ENCODE measurements at regions of chr11 and their contacts with region 1.

Region 1: GRCh38 chr11:47819743-47820142 is 28.4 kb downstream of the NUP160 start:
- DNase-seq: no peak
- ATAC-seq: no peak
- H3K4me3 Mint-ChIP-seq: no peak overlapping the region
- H3K27ac Mint-ChIP-seq: peak overlapping the region; percentile 32
- H3K4me1 Mint-ChIP-seq: peaks cover 9% of the 10 kb centered on the region
- H3K27me3 Mint-ChIP-seq: no peaks in the 10 kb centered on the region
- CTCF ChIP-seq: no peak

Region 2: DNA sequence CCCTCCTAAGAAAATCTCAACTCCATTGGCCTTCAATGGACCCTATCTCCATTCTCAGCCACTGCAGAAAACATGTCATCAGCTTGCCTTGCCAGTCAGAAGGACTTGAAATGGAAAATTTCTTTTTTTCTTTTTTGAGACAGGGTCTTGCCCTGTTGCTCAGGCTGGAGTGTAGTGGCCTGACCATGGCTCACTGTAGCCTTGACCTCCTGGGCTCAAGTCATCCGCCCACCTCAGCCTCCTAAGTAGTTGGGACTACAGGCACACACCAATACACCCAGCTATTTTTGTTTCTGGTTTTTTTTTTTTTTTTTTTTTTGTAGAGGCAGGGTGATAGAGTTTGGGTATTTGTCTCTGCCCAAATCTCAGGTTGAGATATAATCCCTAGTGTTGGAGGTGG is 133.6 kb before region 1 on chr11:
- CTCF ChIA-PET with region 1: no interaction called
- POLR2A ChIA-PET with region 1: interaction called, 11 read pairs
- intact Hi-C with region 1: no loop called
- DNase-seq: no peak
- ATAC-seq: no peak
- H3K4me3 Mint-ChIP-seq: no peak overlapping the region
- H3K27ac Mint-ChIP-seq: no peak overlapping the region
- H3K4me1 Mint-ChIP-seq: peaks cover 9% of the 10 kb centered on the region
- H3K27me3 Mint-ChIP-seq: no peaks in the 10 kb centered on the region
- CTCF ChIP-seq: no peak

Region 3: DNA sequence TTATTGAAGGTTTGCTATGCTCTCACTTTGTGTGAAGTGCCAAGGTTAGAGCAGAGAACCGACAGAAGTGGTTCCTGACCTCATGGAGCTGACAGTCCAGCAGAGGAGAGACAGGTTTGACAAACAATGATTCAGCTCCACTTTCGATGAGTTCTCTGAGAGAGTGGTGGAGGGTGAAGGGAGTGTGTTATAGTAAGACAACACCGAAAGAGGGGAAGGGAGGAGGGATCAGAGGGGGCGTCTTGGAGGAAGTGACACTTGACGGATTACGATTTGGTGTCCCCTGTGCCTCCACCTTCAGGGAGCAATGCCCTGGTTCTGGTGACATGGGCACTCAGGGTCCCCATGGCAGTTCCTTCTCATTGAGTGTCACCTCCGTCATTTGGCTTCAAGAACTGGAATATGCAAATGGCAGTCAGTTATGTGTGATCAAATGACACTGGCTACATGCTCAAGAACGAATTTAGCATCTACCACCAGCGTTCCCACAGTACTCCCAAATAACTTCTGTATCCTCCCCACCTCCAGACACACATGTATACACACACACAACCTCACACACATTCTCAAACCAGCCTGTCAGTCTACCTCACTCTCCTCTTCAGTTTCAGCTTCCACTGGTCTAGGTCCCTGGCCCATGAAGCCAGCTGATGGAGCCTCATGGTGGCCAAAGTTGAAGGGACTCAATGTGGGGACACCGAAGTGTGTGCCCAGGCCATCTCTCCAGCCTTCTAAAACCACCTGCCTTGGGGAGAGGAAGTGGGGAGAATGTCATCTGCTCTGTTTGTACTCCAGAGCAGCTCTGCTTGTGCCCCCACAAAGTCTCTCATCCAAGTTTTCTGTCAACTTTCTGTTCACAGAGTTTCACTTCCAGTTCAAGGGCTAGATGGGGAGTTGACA is 59.8 kb after region 1 on chr11:
- CTCF ChIA-PET with region 1: no interaction called
- POLR2A ChIA-PET with region 1: no interaction called
- intact Hi-C with region 1: no loop called
- DNase-seq: no peak
- ATAC-seq: peak; percentile 66
- H3K4me3 Mint-ChIP-seq: peak overlapping the region; percentile 0
- H3K27ac Mint-ChIP-seq: peak overlapping the region; percentile 72
- H3K4me1 Mint-ChIP-seq: peaks cover 25% of the 10 kb centered on the region
- H3K27me3 Mint-ChIP-seq: no peaks in the 10 kb centered on the region
- CTCF ChIP-seq: no peak

Measured in activated B cell treated with CpG ODN at 0.5 μM for 24 hours (primary cell).